Sciatic nerve (tissue), 2 donors: ENCODE measurements at regions of chr20 and their contacts with region 1.

Region 1: GRCh38 chr20:12838261-12838866 is 170.4 kb upstream of the SPTLC3 start:
- DNase-seq: no peak
- ATAC-seq: no peak

Region 2: GRCh38 chr20:12891643-12892042 is 53.3 kb after region 1 on chr20:
- intact Hi-C with region 1: loop called (anchors 10 kb)
- DNase-seq: no peak
- ATAC-seq: no peak